GM10248 (cell line): ENCODE measurements at regions of chr4 and their contacts with region 1.

Region 1: GRCh38 chr4:185183619-185184281 is 20.1 kb downstream of the CFAP97 start:
- DNase-seq: peak; percentile 61
- CTCF ChIP-seq: peak; percentile 67

Region 2: GRCh38 chr4:185142912-185143595 is 40.7 kb before region 1 on chr4 and contains the start of gene SLC25A4:
- CTCF ChIA-PET with region 1: interaction called, 12 read pairs
- POLR2A ChIA-PET with region 1: interaction called, 7 read pairs
- DNase-seq: peak; percentile 96
- CTCF ChIP-seq: peak; percentile 56

Region 3: GRCh38 chr4:185149392-185149791 is 34.4 kb before region 1 on chr4:
- CTCF ChIA-PET with region 1: interaction called, 6 read pairs
- POLR2A ChIA-PET with region 1: interaction called, 10 read pairs
- DNase-seq: no peak
- CTCF ChIP-seq: no peak

Region 4: GRCh38 chr4:185165605-185166063 is 18.1 kb before region 1 on chr4:
- CTCF ChIA-PET with region 1: interaction called, 131 read pairs
- POLR2A ChIA-PET with region 1: no interaction called
- DNase-seq: peak; percentile 56
- CTCF ChIP-seq: no peak

Region 5: DNA sequence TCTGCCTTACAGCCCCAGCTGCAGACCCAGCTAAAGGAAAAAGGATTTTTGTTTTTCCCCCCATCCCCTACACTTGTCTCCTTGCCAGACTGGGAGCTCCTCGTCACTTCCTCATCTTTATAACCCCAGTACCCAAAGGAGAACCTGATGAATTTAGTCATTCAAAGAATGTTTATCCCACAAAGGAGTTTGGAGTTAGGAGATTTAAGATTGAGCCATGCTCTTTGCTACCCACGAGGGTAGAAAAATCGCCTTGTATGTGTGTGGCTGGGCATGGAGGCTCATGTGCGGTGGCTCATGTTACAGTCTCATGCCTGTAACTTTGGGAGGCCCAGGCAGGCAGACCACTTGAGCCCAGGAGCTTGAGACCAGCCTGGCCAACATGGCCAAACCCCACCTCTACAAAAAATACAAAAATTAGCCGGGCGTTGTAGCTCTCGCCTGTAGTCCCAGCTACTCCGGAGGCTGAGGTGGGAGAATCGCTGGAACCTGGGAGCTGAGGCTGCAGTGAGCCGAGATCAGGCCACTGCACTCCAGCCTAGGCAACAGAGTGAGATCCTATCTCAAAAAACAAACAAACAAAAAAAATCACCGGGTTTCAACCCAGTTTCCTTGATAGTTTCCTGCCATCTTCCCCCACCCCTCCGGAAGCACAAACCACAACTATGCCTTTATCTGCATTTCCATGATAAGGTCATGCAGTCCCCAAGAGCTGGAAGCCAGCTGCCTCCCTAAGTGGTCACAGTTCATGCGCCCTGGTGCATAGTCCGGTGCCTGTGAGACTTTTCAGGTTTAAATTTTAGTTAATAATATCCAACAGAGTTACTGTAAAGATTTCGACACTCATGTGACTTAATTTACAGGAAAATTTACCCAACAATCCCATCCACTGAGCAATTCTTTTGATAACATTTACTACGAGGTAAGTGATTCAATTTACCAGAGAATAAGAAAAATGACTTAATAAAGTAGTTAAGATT is 18.5 kb after region 1 on chr4:
- CTCF ChIA-PET with region 1: interaction called, 70 read pairs
- POLR2A ChIA-PET with region 1: interaction called, 4 read pairs
- DNase-seq: no peak
- CTCF ChIP-seq: no peak

Region 6: GRCh38 chr4:185384930-185385331 is 201.2 kb after region 1 on chr4:
- CTCF ChIA-PET with region 1: no interaction called
- POLR2A ChIA-PET with region 1: no interaction called
- DNase-seq: no peak
- CTCF ChIP-seq: no peak

Region 7: GRCh38 chr4:185437809-185438208 is 254.1 kb after region 1 on chr4:
- CTCF ChIA-PET with region 1: no interaction called
- POLR2A ChIA-PET with region 1: no interaction called
- DNase-seq: peak; percentile 10
- CTCF ChIP-seq: no peak